Psoas muscle (tissue), 8 donors: ENCODE measurements at regions of chr18 and their contacts with region 1.

Region 1: DNA sequence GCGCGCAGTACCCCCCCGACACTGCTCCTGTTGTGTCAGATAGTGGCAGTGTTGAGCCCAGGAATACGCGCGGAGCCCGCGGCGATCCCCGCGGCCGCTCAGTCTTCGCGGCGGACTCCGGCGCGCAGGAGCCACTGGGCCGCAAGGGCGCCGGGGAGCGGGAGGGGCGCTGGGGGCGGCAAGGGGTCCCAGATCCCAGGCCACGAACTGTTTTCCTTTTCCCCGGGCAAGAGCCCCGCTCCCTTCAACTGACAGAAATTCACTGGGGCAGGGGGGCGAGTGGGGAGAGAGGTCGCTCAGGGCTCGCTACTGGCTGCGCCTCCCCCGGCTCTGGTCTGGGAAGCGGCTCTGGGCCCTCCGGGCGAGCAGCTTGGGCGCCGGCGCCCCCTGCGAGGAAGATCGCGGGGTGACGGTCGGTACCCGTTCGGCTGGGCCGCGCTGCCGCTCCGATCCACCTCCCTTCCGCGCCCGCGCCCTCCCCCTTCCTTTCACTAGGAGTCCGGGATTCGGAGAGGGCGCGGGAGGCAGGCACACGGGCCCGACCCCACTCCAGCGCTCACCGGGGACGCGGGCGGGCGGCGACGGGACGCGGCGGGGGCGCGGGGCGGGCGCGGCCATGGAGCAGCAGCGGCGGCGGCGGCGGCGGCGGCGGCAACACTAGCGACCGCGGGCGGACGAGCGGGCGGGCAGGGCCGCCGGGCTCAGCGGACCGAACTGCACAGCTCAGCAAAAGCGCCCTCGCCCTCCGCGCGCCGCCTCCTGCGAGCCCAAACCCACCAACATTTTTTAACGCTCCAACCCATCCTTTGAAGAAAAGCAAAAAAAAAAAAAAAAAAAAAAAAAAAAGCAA is 1.4 kb upstream of the SETBP1 start:
- DNase-seq: peak; percentile 88 to 92
- ATAC-seq: peak; percentile 92 to 94 (median 93)
- H3K4me3 ChIP-seq: peak overlapping the region; percentile 78
- H3K27ac ChIP-seq: peak overlapping the region; percentile 95
- H3K4me1 ChIP-seq: peaks cover 9% of the 10 kb centered on the region
- H3K27me3 ChIP-seq: no peaks in the 10 kb centered on the region
- CTCF ChIP-seq: peak; percentile 62

Region 2: DNA sequence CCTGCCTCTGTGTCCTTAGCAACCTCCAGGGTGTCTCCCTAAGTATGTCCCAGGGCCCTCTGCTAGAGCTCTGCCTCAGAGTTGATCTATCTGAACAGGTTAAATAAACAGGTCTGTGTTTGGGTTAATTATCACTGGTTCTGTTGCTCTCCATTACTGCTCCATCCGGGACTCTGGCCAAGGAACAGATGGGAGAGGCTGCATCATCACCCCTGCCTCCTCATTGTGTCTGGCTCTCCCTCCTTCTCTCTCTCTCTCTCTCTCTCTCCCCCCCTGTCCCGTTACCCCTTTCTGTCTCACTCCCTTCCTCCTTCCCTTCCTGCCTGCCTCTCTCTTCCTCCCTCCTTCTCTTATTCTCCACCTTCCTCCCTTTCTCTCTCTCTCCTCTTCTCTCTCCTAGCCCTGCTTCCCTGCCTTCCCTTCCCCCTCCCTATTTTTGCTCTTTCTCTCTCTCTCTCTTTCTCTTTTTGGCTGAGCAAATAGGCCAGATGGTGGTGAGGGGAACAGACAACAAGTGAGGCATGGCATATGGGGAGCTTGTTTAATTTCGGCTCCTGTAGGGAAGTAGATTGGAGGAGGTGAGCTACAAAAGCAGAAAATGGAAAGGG is 63.5 kb after region 1 on chr18:
- intact Hi-C with region 1: loop called in 1 of 2 experiments (anchors 5 kb)
- DNase-seq: peak; percentile 54 to 66
- ATAC-seq: peak in 3 of 4 donors; percentile 16 to 57 (median 41)
- H3K4me3 ChIP-seq: no peak overlapping the region
- H3K27ac ChIP-seq: peak overlapping the region; percentile 33
- H3K4me1 ChIP-seq: peaks cover 43% of the 10 kb centered on the region
- H3K27me3 ChIP-seq: no peaks in the 10 kb centered on the region
- CTCF ChIP-seq: no peak

Region 3: GRCh38 chr18:44758861-44759631 is 79.8 kb after region 1 on chr18:
- intact Hi-C with region 1: no loop called
- DNase-seq: no peak
- ATAC-seq: no peak
- H3K4me3 ChIP-seq: no peak overlapping the region
- H3K27ac ChIP-seq: peak overlapping the region; percentile 65
- H3K4me1 ChIP-seq: peaks cover 35% of the 10 kb centered on the region
- H3K27me3 ChIP-seq: no peaks in the 10 kb centered on the region
- CTCF ChIP-seq: no peak

Region 4: GRCh38 chr18:44803019-44803650 is 123.9 kb after region 1 on chr18:
- intact Hi-C with region 1: loop called in 1 of 2 experiments (anchors 5 kb)
- DNase-seq: peak; percentile 62 to 79
- ATAC-seq: peak; percentile 96 to 98 (median 96)
- H3K4me3 ChIP-seq: peak overlapping the region; percentile 54
- H3K27ac ChIP-seq: peak overlapping the region; percentile 97
- H3K4me1 ChIP-seq: peaks cover 79% of the 10 kb centered on the region
- H3K27me3 ChIP-seq: no peaks in the 10 kb centered on the region
- CTCF ChIP-seq: no peak

Region 5: GRCh38 chr18:44819944-44820510 is 140.7 kb after region 1 on chr18:
- intact Hi-C with region 1: loop called in 1 of 2 experiments (anchors 5 kb)
- DNase-seq: peak; percentile 83 to 95
- ATAC-seq: peak; percentile 93 to 97 (median 94)
- H3K4me3 ChIP-seq: peak overlapping the region; percentile 6
- H3K27ac ChIP-seq: peak overlapping the region; percentile 81
- H3K4me1 ChIP-seq: peaks cover 64% of the 10 kb centered on the region
- H3K27me3 ChIP-seq: no peaks in the 10 kb centered on the region
- CTCF ChIP-seq: no peak

Region 6: GRCh38 chr18:44895176-44895798 is 216.0 kb after region 1 on chr18:
- intact Hi-C with region 1: loop called (anchors 2 to 5 kb)
- DNase-seq: peak in 1 of 2 donors; percentile 35
- ATAC-seq: peak; percentile 87 to 91 (median 88)
- H3K4me3 ChIP-seq: no peak overlapping the region
- H3K27ac ChIP-seq: no peak overlapping the region
- H3K4me1 ChIP-seq: peaks cover 28% of the 10 kb centered on the region
- H3K27me3 ChIP-seq: no peaks in the 10 kb centered on the region
- CTCF ChIP-seq: peak; percentile 45

Region 7: DNA sequence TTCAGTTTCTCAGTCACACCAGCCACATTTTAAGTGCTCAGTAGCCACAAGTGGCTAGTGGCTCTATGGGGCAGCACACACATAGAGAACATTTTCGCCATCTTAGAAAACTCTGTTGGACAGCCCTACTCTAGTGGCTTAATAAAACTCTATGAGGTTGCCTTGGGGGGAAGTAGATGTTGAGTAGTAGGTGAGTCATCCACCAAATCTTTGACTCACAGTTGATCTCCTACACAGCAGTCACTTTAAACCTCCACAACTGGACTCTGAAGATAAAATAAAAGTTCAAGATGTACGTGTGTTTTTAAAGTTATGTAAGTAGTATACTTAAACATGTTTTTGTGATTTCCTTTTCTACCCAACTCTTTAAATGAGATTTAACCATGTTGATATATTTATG is 380.4 kb after region 1 on chr18:
- intact Hi-C with region 1: loop called in 1 of 2 experiments (anchors 10 kb)
- DNase-seq: no peak
- ATAC-seq: peak; percentile 44 to 89 (median 80)
- H3K4me3 ChIP-seq: no peak overlapping the region
- H3K27ac ChIP-seq: no peak overlapping the region
- H3K4me1 ChIP-seq: peaks cover 5% of the 10 kb centered on the region
- H3K27me3 ChIP-seq: no peaks in the 10 kb centered on the region
- CTCF ChIP-seq: no peak

Region 8: DNA sequence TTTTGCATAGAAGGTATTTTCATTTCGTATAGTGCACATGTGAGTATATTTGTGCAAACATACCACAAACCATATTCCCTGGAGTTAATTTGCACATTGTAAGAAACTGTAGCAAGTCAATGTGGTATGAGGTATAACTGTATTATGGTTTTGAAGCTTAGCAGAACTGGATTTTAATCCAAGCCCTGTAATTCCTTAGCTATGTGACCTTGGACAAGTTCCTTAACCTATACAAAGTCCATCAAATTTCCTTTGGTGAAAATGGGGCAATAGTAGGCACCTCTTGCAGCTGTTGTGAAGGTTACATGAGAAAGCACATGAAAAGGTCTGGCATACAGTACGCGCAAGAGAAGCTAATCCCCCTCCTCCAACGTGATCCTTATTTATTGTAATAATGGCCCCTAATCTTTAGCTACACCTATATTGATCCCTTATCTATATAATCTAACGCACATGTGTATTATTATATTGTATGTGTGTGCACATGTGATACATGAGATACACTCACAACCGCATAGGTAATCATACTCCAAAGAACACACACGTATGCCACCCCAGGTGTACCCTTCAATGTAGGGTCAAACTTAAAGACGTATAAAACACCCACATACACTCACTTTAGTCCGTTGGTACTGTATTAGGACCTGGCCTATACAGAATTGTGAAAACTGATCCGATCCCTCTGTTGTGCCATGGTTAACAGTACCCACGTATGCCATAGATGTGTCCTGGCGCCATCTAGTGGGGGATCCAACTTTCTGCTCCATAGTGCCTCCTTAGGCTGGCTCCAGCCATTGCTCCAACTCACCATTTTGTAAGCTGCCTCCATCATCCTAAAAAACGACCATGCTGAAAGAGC is 533.1 kb after region 1 on chr18:
- intact Hi-C with region 1: loop called in 1 of 2 experiments (anchors 5 kb)
- DNase-seq: peak; percentile 74 to 87
- ATAC-seq: peak; percentile 93 to 100 (median 100)
- H3K4me3 ChIP-seq: no peak overlapping the region
- H3K27ac ChIP-seq: no peak overlapping the region
- H3K4me1 ChIP-seq: no peaks in the 10 kb centered on the region
- H3K27me3 ChIP-seq: no peaks in the 10 kb centered on the region
- CTCF ChIP-seq: peak; percentile 93